ENCODE measurements at regions of chr5 and their contacts with region 1.

Region 1: GRCh38 chr5:76771705-76772405 is 47.0 kb upstream of the F2RL1 start:
- DNase-seq: no peak
- H3K4me3 ChIP-seq: no peak overlapping the region
- H3K27ac ChIP-seq: no peak overlapping the region
- H3K27me3 ChIP-seq: no peaks in the 10 kb centered on the region
- CTCF ChIP-seq: no peak

Region 2: GRCh38 chr5:76415855-76416254 is 356.0 kb before region 1 on chr5:
- CTCF ChIA-PET with region 1: no interaction called
- POLR2A ChIA-PET with region 1: no interaction called
- DNase-seq: no peak
- H3K4me3 ChIP-seq: no peak overlapping the region
- H3K27ac ChIP-seq: no peak overlapping the region
- H3K27me3 ChIP-seq: no peaks in the 10 kb centered on the region
- CTCF ChIP-seq: no peak

Region 3: GRCh38 chr5:76601470-76601869 is 170.4 kb before region 1 on chr5:
- CTCF ChIA-PET with region 1: interaction called, 229 read pairs
- POLR2A ChIA-PET with region 1: no interaction called
- DNase-seq: peak; percentile 45
- H3K4me3 ChIP-seq: no peak overlapping the region
- H3K27ac ChIP-seq: no peak overlapping the region
- H3K27me3 ChIP-seq: no peaks in the 10 kb centered on the region
- CTCF ChIP-seq: peak; percentile 81

Region 4: DNA sequence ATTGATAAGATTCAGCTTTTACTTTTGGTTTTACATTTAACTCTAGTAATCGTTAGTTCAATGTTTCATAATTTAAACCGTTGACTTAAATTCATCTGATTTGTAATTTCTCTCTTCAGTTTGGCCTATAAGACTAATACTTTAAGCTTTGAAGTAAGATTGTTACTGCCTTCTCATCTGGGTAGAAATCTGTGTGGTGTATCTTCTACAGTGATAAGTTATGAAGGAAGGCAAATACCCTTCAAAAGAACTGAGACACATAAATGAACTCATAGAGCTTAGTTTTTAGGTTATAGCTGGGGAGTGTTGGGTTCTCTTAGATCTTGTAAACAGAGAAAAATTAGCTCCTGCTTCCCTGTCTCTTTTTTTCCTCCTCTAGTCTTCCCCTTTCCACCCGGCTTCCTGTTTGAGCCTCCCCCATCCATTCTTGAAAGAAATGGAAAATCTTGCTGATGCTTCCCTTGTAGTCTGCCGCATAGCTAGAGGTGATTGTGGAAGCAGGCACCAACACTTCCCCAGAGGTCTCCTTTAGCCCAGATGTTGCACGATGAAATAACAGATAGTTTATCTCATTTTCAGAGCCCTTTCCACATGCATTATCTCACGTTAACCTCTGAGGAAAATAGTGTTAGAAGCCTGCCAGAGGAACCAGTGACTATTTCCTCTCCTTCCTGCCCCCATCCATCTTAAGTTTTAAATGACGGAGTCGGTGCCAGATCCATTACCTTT is 146.6 kb before region 1 on chr5:
- CTCF ChIA-PET with region 1: interaction called, 12 read pairs
- POLR2A ChIA-PET with region 1: no interaction called
- DNase-seq: no peak
- H3K4me3 ChIP-seq: no peak overlapping the region
- H3K27ac ChIP-seq: no peak overlapping the region
- H3K27me3 ChIP-seq: no peaks in the 10 kb centered on the region
- CTCF ChIP-seq: no peak

Region 5: GRCh38 chr5:76689321-76690036 is 82.4 kb before region 1 on chr5:
- CTCF ChIA-PET with region 1: interaction called, 19 read pairs
- POLR2A ChIA-PET with region 1: interaction called, 4 read pairs
- DNase-seq: peak; percentile 85
- H3K4me3 ChIP-seq: no peak overlapping the region
- H3K27ac ChIP-seq: peak overlapping the region; percentile 90
- H3K27me3 ChIP-seq: no peaks in the 10 kb centered on the region
- CTCF ChIP-seq: no peak

Region 6: DNA sequence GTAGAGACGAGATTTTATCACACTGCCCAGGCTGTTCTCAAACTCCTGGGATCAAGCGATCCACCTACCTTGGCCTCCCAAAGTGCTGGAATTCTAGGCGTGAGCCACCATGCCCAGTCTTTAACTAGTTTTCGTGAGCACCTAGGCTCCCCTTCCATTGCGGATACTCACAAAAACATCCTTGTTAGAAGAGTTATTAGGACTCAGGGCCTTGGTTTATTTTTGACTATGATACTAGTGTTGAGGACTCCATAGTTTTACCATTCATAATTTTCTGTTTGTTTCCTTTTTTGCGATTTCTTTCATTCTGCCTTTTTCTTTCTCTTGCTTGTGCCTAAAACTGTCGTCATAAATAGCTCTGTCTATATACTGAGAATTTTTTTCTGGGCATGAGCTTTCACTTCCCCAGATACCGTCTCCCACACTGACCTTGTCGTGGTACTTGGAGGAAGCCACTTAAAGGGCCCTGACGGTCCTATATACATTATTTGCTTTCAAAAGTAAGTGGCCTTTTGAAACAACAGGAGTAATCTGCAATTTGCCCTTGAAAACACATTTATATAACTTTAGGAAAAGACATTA is 50.8 kb before region 1 on chr5:
- CTCF ChIA-PET with region 1: interaction called, 22 read pairs
- POLR2A ChIA-PET with region 1: no interaction called
- DNase-seq: no peak
- H3K4me3 ChIP-seq: no peak overlapping the region
- H3K27ac ChIP-seq: no peak overlapping the region
- H3K27me3 ChIP-seq: no peaks in the 10 kb centered on the region
- CTCF ChIP-seq: no peak

Region 7: GRCh38 chr5:76755779-76756637 is 15.8 kb before region 1 on chr5:
- CTCF ChIA-PET with region 1: interaction called, 15 read pairs
- POLR2A ChIA-PET with region 1: no interaction called
- DNase-seq: no peak
- H3K4me3 ChIP-seq: no peak overlapping the region
- H3K27ac ChIP-seq: no peak overlapping the region
- H3K27me3 ChIP-seq: no peaks in the 10 kb centered on the region
- CTCF ChIP-seq: no peak

Region 8: GRCh38 chr5:76841361-76841760 is 69.5 kb after region 1 on chr5:
- CTCF ChIA-PET with region 1: interaction called, 10 read pairs
- POLR2A ChIA-PET with region 1: interaction called, 3 read pairs
- DNase-seq: no peak
- H3K4me3 ChIP-seq: no peak overlapping the region
- H3K27ac ChIP-seq: no peak overlapping the region
- H3K27me3 ChIP-seq: no peaks in the 10 kb centered on the region
- CTCF ChIP-seq: no peak

Measured in AG04450 (cell line).